B cell (primary cell): ENCODE measurements at regions of chr19 and their contacts with region 1.

Region 1: DNA sequence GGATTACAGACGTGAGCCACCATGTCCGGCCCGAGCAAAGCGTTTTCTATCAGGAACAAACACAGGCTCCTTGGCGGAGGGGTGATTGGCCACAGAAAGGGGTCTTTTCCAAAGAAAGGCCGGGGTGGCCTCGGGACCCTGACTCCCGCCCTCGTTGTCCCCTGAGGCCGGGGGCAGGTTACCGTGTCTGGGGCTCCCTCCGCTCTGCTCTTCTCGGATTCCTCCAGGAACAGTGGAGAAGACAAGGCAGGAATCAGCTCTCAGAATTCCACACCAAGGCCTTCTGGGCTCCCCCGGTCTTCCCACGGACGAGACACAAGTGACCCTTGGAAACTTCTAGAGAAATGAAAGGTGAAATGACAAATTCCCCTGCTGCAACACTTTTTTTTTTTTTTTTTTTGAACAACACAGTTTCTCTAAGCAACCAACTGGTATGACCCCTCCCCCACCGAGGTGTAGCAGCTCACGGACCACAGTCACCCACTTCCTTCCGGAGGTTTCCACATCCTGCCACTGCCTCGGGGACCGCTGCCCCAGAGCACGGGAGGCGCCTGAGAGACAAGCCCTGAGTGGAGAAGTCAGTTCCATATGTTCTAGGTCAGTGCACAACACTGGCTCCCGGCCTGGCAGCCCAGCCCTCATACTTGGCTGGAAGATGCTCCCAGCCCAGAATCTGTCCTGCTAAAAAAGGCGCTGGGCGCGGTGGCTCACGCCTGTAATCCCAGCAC is 11.0 kb downstream of the MOB3A start:
- DNase-seq: peak; percentile 97
- ATAC-seq: peak; percentile 29
- H3K4me3 ChIP-seq: peak overlapping the region; percentile 87 to 100 (median 98)
- H3K4me3 Mint-ChIP-seq: peak overlapping the region; percentile 92
- H3K27ac ChIP-seq: peak overlapping the region; percentile 96 to 99
- H3K27ac Mint-ChIP-seq: peak overlapping the region; percentile 99
- H3K4me1 ChIP-seq: peaks cover 74 to 81% of the 10 kb centered on the region in 2 donors
- H3K4me1 Mint-ChIP-seq: peaks cover 79% of the 10 kb centered on the region
- H3K27me3 ChIP-seq: no peaks in the 10 kb centered on the region
- H3K27me3 Mint-ChIP-seq: no peaks in the 10 kb centered on the region
- CTCF ChIP-seq: no peak

Region 2: GRCh38 chr19:2041683-2042484 is 43.3 kb before region 1 on chr19:
- CTCF ChIA-PET with region 1: interaction called, 5 read pairs
- POLR2A ChIA-PET with region 1: interaction called, 69 read pairs
- intact Hi-C with region 1: no loop called
- DNase-seq: peak; percentile 98
- ATAC-seq: peak; percentile 73
- H3K4me3 ChIP-seq: peak overlapping the region in 4 of 5 experiments; percentile 32 to 55 (median 42)
- H3K4me3 Mint-ChIP-seq: peak overlapping the region; percentile 74
- H3K27ac ChIP-seq: peak overlapping the region; percentile 98 to 99
- H3K27ac Mint-ChIP-seq: peak overlapping the region; percentile 87
- H3K4me1 ChIP-seq: peaks cover 54 to 67% of the 10 kb centered on the region in 2 donors
- H3K4me1 Mint-ChIP-seq: peaks cover 63% of the 10 kb centered on the region
- H3K27me3 ChIP-seq: no peaks in the 10 kb centered on the region
- H3K27me3 Mint-ChIP-seq: no peaks in the 10 kb centered on the region
- CTCF ChIP-seq: no peak

Region 3: GRCh38 chr19:2061495-2062381 is 23.4 kb before region 1 on chr19:
- CTCF ChIA-PET with region 1: interaction called, 96 read pairs
- POLR2A ChIA-PET with region 1: interaction called, 19 read pairs
- intact Hi-C with region 1: no loop called
- DNase-seq: peak; percentile 99
- ATAC-seq: peak; percentile 92
- H3K4me3 ChIP-seq: peak overlapping the region; percentile 8 to 94 (median 84)
- H3K4me3 Mint-ChIP-seq: peak overlapping the region; percentile 95
- H3K27ac ChIP-seq: peak overlapping the region; percentile 92 to 97
- H3K27ac Mint-ChIP-seq: peak overlapping the region; percentile 95
- H3K4me1 ChIP-seq: peaks cover 30 to 67% of the 10 kb centered on the region in 2 donors
- H3K4me1 Mint-ChIP-seq: peaks cover 44% of the 10 kb centered on the region
- H3K27me3 ChIP-seq: no peaks in the 10 kb centered on the region
- H3K27me3 Mint-ChIP-seq: no peaks in the 10 kb centered on the region
- CTCF ChIP-seq: no peak

Region 4: DNA sequence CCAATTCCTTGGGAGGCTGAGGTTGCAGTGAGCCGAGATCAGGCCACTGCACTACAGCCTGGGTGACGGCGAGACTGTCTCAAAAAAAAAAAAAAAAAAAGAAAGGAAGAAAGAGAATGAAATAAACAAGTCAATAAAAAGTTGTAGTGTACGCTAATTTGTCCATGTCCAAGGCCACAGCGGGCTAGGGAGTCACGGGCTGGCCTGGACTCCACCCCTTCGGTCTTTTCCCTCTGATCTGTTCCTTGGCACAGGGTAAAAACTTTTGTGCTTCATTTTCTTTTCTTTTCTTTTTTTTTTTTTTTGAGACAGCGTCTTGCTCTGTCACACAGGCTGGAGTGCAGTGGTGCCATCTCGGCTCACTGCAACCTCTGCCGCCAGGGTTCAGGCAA is 14.7 kb before region 1 on chr19:
- CTCF ChIA-PET with region 1: interaction called, 96 read pairs
- POLR2A ChIA-PET with region 1: interaction called, 20 read pairs
- intact Hi-C with region 1: loop called (anchors 1 kb)
- DNase-seq: no peak
- ATAC-seq: no peak
- H3K4me3 ChIP-seq: no peak overlapping the region
- H3K4me3 Mint-ChIP-seq: no peak overlapping the region
- H3K27ac ChIP-seq: peak overlapping the region in 1 of 2 donors; percentile 64
- H3K27ac Mint-ChIP-seq: peak overlapping the region; percentile 10
- H3K4me1 ChIP-seq: peaks cover 30 to 57% of the 10 kb centered on the region in 2 donors
- H3K4me1 Mint-ChIP-seq: peaks cover 54% of the 10 kb centered on the region
- H3K27me3 ChIP-seq: no peaks in the 10 kb centered on the region
- H3K27me3 Mint-ChIP-seq: no peaks in the 10 kb centered on the region
- CTCF ChIP-seq: no peak

Region 5: DNA sequence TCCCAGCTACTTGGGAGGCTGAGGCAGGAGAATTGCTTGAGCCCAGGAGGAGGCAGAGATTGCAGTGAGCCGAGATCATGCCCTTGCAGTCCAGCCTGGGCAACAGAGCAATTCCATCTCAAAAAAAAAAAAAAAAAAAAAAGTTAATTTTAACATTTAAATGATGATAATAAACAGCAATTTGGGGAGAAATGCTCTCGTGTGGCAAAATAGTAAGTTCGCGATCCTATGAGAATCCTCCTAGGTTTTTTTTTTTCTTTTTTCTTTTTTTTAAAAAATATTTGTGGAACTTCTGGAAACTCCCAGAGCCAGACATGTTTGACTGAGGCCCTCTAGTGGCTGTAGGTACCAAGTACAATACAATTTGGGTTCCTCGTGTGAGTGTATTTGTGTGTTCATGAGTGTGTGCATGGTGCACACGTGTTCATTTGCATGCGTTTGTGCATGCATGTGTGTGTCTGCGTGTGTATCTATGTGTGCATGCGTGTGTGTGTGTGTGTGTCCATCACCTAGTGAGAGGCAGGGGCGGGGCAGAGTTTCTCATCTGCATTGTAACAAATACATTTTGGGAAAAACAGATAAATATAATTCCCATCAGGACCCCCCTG is 306.1 kb after region 1 on chr19:
- CTCF ChIA-PET with region 1: no interaction called
- POLR2A ChIA-PET with region 1: no interaction called
- intact Hi-C with region 1: no loop called
- DNase-seq: peak; percentile 82
- ATAC-seq: peak; percentile 51
- H3K4me3 ChIP-seq: no peak overlapping the region
- H3K4me3 Mint-ChIP-seq: peak overlapping the region; percentile 61
- H3K27ac ChIP-seq: no peak overlapping the region
- H3K27ac Mint-ChIP-seq: peak overlapping the region; percentile 70
- H3K4me1 ChIP-seq: peaks cover 16 to 31% of the 10 kb centered on the region in 2 donors
- H3K4me1 Mint-ChIP-seq: peaks cover 32% of the 10 kb centered on the region
- H3K27me3 ChIP-seq: no peaks in the 10 kb centered on the region
- H3K27me3 Mint-ChIP-seq: no peaks in the 10 kb centered on the region
- CTCF ChIP-seq: peak; percentile 92